GM10248 (cell line): ENCODE measurements at regions of chr2 and their contacts with region 1.

Region 1: GRCh38 chr2:136195226-136195625 is 77.3 kb upstream of the CXCR4 start:
- DNase-seq: no peak
- CTCF ChIP-seq: no peak

Region 2: DNA sequence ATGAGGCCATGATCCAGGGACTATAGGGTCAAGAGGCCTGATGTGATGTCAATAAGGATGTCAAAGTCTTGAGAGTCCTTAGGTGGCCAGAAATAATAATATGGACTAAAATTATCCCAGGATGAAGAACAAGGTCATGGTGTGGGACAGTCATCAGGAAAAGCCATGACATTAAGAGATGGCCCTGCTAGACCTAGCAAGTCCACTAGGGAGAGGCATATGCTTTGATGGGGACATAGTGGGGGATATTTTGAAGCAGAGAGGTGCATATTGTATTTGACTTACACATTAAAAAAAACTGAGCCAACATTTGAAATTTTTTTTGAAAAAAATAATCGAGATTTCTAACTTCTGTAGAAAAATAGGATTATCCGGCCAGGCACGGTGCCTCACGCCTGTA is 24.0 kb before region 1 on chr2:
- CTCF ChIA-PET with region 1: no interaction called
- POLR2A ChIA-PET with region 1: no interaction called
- DNase-seq: no peak
- CTCF ChIP-seq: no peak

Region 3: DNA sequence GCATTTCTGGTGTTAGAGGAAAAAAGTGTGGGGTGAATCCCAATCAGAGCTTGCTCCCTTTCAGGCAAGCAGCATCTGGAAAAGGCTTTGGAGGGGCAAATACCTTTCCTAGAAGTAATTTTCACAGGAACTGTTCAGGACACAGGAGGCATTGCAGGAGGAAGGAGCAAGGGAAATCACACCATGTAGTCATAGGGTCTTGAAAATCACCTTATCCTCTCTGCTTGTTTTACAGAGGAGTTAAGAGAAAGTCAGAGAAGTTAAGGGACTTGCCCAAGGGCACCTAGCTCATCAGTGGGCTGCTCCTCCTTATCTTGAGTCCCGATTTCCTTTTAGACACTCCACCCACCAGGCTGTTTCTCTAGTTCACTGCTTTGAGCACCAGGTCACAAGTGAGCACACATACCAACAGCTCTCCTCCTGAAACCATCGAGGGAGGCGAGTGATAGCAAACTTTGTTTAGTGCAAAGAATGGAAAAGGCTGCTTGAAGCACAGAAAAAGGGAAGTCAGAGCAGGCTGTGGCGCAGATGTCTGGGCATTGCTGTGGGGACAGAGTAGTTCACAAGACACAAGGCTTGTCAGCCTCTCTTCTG is 11.9 kb after region 1 on chr2:
- CTCF ChIA-PET with region 1: interaction called, 10 read pairs
- POLR2A ChIA-PET with region 1: no interaction called
- DNase-seq: peak; percentile 26
- CTCF ChIP-seq: no peak

Region 4: DNA sequence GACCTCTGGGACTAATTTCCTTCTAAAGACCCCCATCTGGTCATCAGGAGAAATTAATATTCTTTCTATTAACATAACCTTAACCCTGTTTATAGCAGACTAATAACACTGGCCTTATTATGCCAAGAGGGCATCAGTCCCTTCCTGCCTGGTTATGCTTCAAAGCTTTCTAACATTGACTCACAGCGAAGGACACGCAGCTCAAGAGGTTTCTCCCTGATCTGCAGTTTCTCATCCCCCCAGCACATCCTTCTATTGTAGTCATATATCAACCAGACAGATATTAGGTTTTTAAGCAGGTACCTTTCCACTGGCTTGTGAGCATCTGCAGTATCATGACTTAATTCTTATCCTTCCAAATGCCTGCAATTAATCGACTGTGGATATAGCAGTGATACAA is 22.8 kb after region 1 on chr2:
- CTCF ChIA-PET with region 1: no interaction called
- POLR2A ChIA-PET with region 1: no interaction called
- DNase-seq: no peak
- CTCF ChIP-seq: no peak

Region 5: DNA sequence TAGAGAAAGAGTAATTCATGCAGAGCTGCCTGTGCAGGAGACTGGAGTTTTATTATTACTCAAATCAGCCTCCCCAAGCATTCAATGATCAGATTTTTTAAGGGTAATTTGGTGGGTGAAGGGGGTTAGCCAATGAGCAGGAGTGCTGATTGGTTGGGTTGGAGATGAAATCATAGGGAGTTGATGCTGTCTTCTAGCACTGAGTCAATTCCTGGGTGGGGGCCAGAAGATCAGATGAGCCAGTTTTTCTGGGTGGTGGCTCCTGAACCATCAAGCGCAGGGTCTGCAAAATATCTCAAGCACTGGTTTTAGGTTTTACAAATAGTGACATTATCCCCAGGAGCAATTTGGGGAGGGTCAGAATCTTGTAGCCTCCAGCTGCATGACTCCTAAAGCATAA is 257.3 kb after region 1 on chr2:
- CTCF ChIA-PET with region 1: no interaction called
- POLR2A ChIA-PET with region 1: no interaction called
- DNase-seq: no peak
- CTCF ChIP-seq: no peak